Pancreas (tissue), 10 donors: ENCODE measurements at regions of chr13 and their contacts with region 1.

Region 1: GRCh38 chr13:44969551-44970484 is 19.5 kb downstream of the NUFIP1 start:
- DNase-seq: no peak
- ATAC-seq: peak; percentile 72 to 84 (median 80)
- H3K4me3 ChIP-seq: no peak overlapping the region
- H3K27ac ChIP-seq: no peak overlapping the region
- H3K4me1 ChIP-seq: peaks cover 0 to 14% (median 10%) of the 10 kb centered on the region in 3 donors
- H3K27me3 ChIP-seq: no peaks in the 10 kb centered on the region
- CTCF ChIP-seq: peak; percentile 49 to 72 (median 58)

Region 2: GRCh38 chr13:44470638-44471562 is 498.9 kb before region 1 on chr13:
- intact Hi-C with region 1: loop called in 1 of 3 experiments (anchors 5 kb)
- DNase-seq: no peak
- ATAC-seq: peak in 3 of 4 donors; percentile 59 to 70 (median 60)
- H3K4me3 ChIP-seq: no peak overlapping the region
- H3K27ac ChIP-seq: no peak overlapping the region
- H3K4me1 ChIP-seq: no peaks in the 10 kb centered on the region
- H3K27me3 ChIP-seq: no peaks in the 10 kb centered on the region
- CTCF ChIP-seq: peak in 2 of 4 donors; percentile 6 to 44

Region 3: DNA sequence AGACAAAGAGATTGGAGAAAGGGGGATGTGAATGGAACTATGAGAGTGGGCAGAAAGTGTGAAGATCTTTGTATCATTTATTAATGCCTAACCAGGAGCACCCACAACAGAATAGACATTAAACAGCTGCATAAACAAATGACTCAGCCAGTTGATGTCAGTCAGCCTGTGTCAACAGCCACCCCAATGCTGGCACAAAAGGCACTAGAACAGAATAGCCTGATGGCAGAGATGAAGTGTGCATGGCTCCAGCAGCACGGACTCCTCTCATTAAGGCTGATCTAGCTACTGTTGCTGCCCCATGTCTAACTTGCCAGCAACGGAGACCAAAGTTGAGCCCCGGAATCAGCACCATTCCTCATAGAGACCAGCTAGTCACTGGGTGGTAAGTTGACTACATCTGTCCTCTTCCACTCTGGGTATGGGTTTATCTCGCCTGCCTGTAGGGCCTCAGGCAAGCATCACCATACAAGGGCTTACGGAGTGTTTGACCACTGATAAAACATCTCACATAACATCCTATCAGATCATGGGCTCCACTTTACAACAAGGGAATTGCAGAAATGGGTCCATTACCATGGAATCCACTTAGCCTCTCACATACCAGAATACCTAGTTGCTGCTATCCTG is 1127.3 kb after region 1 on chr13:
- intact Hi-C with region 1: no loop called
- DNase-seq: peak in 2 of 6 donors; percentile 17 to 58
- ATAC-seq: peak; percentile 73 to 93 (median 84)
- H3K4me3 ChIP-seq: no peak overlapping the region
- H3K27ac ChIP-seq: no peak overlapping the region
- H3K4me1 ChIP-seq: peaks cover 0 to 8% (median 0%) of the 10 kb centered on the region in 3 donors
- H3K27me3 ChIP-seq: no peaks in the 10 kb centered on the region
- CTCF ChIP-seq: no peak